OCI-LY7 (cell line): ENCODE measurements at regions of chr11 and their contacts with region 1.

Region 1: DNA sequence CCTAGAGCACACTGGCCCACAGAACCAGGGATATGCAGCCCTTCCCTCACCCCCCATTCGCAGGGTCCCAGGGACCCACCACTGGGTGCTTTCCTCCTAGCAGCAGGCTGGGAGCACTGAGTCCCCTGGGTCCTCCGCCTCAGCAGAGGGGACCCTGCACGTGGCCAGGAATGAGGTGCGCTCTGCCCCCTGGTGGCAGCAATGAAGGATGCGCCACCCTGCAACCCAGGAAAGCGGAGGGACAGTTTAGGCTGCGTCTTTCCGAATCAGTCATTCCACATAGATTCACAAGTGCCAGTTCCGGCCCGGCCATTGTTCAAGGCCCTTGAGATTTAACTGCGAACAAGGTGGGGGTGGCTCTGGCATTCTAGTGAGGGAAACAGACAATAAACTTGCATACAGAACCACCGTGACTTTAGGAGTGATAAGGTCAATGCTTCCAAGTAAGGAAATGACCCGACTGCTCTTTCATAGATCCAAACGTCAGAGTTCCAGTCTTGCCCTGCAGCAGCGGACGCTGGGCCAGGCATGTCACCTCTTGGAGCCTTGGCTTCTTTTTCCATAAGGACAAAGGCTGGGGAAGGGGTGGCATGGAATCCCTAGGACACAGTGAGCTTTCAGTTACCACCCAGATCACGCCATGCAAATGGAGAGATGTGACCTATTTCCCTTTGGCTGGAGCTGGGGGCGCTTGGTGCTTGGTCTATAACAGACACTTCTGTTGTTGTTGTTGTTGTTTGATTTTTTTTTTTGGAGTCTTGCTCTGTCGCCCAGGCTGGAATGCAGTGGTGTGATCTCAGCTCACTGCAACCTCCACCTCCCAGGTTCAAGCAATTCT is 7.7 kb downstream of the RIN1 start:
- DNase-seq: peak; percentile 88
- H3K4me3 ChIP-seq: peak overlapping the region; percentile 51
- H3K27ac ChIP-seq: peak overlapping the region; percentile 45
- H3K4me1 ChIP-seq: peaks cover 46% of the 10 kb centered on the region
- CTCF ChIP-seq: peak; percentile 91

Region 2: GRCh38 chr11:66288671-66289547 is 39.6 kb before region 1 on chr11 and contains the start of gene YIF1A:
- CTCF ChIA-PET with region 1: no interaction called
- POLR2A ChIA-PET with region 1: no interaction called
- intact Hi-C with region 1: loop called (anchors 2 kb)
- DNase-seq: peak; percentile 99
- H3K4me3 ChIP-seq: peak within 1 kb of the TSS; percentile 88
- H3K27ac ChIP-seq: peak within 1 kb of the TSS; percentile 37
- H3K4me1 ChIP-seq: peaks cover 31% of the 10 kb centered on the region
- CTCF ChIP-seq: no peak; the same call in 1 of the 2 replicates
- total RNA-seq, gene YIF1A: 63.9 and 73.4 TPM in 2 replicates